ENCODE measurements at regions of chr7 and their contacts with region 1.

Region 1: DNA sequence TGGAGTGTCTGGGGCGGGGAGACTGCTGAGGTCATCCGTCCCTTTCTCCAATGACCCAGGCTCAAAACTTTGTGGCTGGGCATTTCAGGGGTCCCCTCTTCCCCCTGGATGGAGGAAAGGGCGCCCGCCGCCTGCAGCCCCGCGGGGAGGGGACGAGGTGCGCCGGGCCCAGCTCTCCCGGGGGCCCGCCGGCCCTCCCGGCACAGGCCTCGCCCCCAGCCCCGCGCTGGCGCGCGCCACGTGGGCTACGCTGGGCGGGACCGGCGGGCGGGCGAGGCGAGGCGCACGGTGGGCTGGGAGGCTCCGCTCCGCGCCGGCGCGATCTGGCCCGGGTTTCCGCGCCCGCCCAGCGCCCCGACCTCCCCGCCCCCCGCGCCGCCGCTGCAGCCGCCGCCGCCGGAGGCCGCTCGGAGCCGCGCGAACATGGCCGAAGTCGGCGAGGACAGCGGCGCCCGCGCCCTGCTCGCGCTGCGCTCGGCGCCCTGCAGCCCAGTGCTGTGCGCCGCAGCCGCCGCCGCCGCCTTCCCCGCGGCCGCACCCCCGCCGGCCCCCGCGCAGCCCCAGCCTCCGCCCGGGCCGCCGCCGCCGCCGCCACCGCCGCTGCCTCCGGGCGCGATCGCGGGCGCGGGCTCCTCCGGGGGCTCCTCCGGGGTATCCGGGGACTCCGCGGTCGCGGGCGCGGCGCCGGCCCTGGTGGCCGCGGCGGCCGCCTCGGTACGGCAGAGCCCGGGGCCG is at the start of gene FOXK1:
- DNase-seq: peak; percentile 85
- ATAC-seq: peak; percentile 83
- H3K4me3 Mint-ChIP-seq: peak within 1 kb of the TSS; percentile 92
- H3K27ac Mint-ChIP-seq: peak within 1 kb of the TSS; percentile 95
- H3K4me1 Mint-ChIP-seq: peaks cover 30% of the 10 kb centered on the region
- H3K27me3 Mint-ChIP-seq: peaks cover 3% of the 10 kb centered on the region
- CTCF ChIP-seq: no peak
- total RNA-seq, gene FOXK1: 37.5 and 42.7 TPM in 2 replicates

Region 2: DNA sequence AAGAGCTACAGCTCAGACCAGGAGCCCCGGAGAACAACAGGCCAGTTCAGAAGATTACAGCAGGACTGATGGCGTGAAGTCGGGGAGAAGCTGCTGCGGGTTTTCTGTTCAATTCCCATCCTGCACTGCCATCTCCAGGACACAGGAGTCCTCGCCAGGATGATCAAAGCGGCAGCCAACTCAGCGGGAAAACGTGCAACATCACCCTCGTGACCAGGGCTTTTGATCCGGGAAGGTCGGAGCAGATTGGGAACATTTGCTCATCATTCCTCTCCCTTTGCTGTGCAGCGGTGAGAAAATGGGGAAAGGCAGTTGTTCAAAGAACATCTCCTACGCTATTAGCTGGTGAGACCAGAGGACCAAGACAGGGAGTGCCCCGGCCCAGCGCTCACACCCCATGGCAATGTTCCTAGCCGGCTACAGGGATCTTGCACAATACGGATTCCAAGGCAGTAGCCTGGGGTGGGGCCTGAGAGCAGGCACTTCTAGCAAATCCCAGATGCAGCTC is 50.3 kb before region 1 on chr7:
- CTCF ChIA-PET with region 1: no interaction called
- POLR2A ChIA-PET with region 1: no interaction called
- intact Hi-C with region 1: no loop called
- DNase-seq: no peak
- ATAC-seq: no peak
- H3K4me3 Mint-ChIP-seq: no peak overlapping the region
- H3K27ac Mint-ChIP-seq: no peak overlapping the region
- H3K4me1 Mint-ChIP-seq: no peaks in the 10 kb centered on the region
- H3K27me3 Mint-ChIP-seq: peaks cover 14% of the 10 kb centered on the region
- CTCF ChIP-seq: no peak

Region 3: GRCh38 chr7:4712281-4713182 is 30.5 kb after region 1 on chr7:
- CTCF ChIA-PET with region 1: no interaction called
- POLR2A ChIA-PET with region 1: interaction called, 6 read pairs
- intact Hi-C with region 1: loop called (anchors 1 kb)
- DNase-seq: no peak
- ATAC-seq: peak; percentile 78
- H3K4me3 Mint-ChIP-seq: peak overlapping the region; percentile 75
- H3K27ac Mint-ChIP-seq: peak overlapping the region; percentile 73
- H3K4me1 Mint-ChIP-seq: peaks cover 50% of the 10 kb centered on the region
- H3K27me3 Mint-ChIP-seq: no peaks in the 10 kb centered on the region
- CTCF ChIP-seq: no peak

Region 4: DNA sequence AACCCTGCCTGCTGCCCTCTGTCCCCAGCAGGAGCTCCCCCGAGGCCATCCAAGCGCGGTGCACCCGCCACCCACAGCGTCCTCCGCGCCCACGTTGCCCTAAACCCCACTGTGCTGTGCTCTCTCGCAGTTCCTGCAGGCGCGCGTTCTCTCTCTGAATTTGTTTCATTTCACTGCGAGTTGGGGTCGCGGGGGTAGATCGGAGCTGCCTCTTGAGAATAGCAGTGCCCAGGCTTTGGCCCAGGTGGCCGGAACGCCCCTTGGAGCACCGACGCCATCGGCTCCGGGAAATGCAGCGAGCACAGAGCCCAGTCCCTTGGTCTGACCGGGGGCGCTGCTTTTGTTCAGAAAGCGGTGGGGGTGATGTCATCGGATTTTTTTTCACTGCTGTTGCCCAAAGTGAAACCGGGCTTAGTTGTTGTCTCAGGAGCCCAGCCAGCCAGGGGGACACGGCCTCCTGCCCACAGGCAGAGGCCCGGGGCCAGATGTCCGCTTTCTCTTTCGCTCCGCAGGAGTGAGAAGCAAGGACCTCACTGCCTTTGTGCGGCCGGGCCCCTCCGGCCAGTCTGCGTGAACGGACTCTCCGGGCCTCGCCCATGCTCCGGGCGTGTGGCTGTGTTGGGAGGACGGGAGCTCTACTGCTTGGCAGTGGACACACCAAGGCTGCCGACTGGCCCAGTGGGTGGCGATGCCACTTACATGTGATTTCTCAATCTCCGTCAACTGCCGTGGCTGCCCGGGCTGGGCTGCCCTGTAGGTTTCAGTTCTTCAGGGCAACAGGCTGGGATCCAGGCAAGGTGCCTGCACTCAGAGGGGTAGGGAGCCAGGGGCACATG is 43.2 kb after region 1 on chr7:
- CTCF ChIA-PET with region 1: no interaction called
- POLR2A ChIA-PET with region 1: interaction called, 7 read pairs
- intact Hi-C with region 1: loop called (anchors 1 kb)
- DNase-seq: peak; percentile 39
- ATAC-seq: peak; percentile 76
- H3K4me3 Mint-ChIP-seq: peak overlapping the region; percentile 90
- H3K27ac Mint-ChIP-seq: peak overlapping the region; percentile 84
- H3K4me1 Mint-ChIP-seq: peaks cover 52% of the 10 kb centered on the region
- H3K27me3 Mint-ChIP-seq: no peaks in the 10 kb centered on the region
- CTCF ChIP-seq: no peak

Region 5: GRCh38 chr7:4744391-4745264 is 62.6 kb after region 1 on chr7:
- CTCF ChIA-PET with region 1: no interaction called
- POLR2A ChIA-PET with region 1: interaction called, 29 read pairs
- intact Hi-C with region 1: loop called (anchors 1 kb)
- DNase-seq: peak; percentile 67
- ATAC-seq: peak; percentile 82
- H3K4me3 Mint-ChIP-seq: peak overlapping the region; percentile 81
- H3K27ac Mint-ChIP-seq: peak overlapping the region; percentile 92
- H3K4me1 Mint-ChIP-seq: peaks cover 58% of the 10 kb centered on the region
- H3K27me3 Mint-ChIP-seq: no peaks in the 10 kb centered on the region
- CTCF ChIP-seq: no peak

Region 6: GRCh38 chr7:5231811-5232484 is 549.9 kb after region 1 on chr7:
- CTCF ChIA-PET with region 1: no interaction called
- POLR2A ChIA-PET with region 1: no interaction called
- intact Hi-C with region 1: no loop called
- DNase-seq: peak; percentile 60
- ATAC-seq: peak; percentile 65
- H3K4me3 Mint-ChIP-seq: peak overlapping the region; percentile 81
- H3K27ac Mint-ChIP-seq: peak overlapping the region; percentile 99
- H3K4me1 Mint-ChIP-seq: peaks cover 75% of the 10 kb centered on the region
- H3K27me3 Mint-ChIP-seq: no peaks in the 10 kb centered on the region
- CTCF ChIP-seq: no peak

Measured in activated B cell treated with CpG ODN at 0.5 μM for 24 hours (primary cell).